ENCODE measurements at regions of chr5 and their contacts with region 1.

Region 1: DNA sequence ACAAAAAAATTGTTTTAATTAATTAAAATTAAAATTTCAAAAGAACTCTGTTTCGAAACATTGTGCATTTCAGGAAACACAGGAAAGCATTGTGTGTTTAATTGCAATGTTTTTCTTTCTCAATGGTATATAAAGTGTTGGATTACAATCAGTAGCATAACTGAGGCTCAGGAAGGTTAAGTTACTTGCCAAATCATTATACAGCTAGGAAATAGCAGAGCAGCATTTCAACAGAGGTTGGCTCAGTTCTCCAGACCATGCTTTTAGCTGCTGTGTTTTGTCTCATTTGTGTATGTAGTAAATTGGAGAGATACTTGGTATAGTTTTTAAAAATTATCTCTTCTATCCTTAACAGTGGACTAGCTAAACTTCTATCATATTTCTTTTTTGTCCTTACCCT is 30.0 kb upstream of the CAMLG start:
- DNase-seq: no peak
- H3K4me3 ChIP-seq: no peak overlapping the region
- H3K27ac ChIP-seq: no peak overlapping the region
- H3K4me1 ChIP-seq: no peaks in the 10 kb centered on the region
- H3K27me3 ChIP-seq: no peaks in the 10 kb centered on the region
- CTCF ChIP-seq: no peak
- POLR2A ChIP-seq: no peak

Region 2: DNA sequence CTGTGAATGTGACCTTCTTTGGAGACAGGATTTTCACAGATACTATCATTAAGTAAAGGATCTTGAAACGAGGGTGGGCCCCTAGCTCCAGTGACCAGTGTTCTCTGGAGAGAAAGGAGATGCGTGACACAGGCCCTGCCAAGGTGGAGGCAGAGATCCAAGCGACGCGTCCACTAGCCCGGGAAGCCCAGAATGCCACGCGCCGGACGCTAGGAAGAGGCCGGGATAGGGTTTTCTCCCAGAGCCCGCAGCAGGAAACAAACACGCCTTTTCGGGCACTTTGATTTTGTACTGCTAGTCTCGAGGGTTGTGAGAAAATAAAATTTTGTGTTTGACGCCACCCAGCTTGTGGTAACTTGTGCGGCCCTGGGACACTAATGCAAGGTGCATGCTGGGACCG is 674.0 kb before region 1 on chr5:
- intact Hi-C with region 1: loop called (anchors 5 kb)
- DNase-seq: no peak
- H3K4me3 ChIP-seq: no peak overlapping the region
- H3K27ac ChIP-seq: no peak overlapping the region
- H3K4me1 ChIP-seq: no peaks in the 10 kb centered on the region
- H3K27me3 ChIP-seq: no peaks in the 10 kb centered on the region
- CTCF ChIP-seq: no peak
- POLR2A ChIP-seq: no peak

Measured in breast epithelium (tissue), 4 donors.